Upper lobe of right lung (tissue), 1 donor: ENCODE measurements at regions of chr1 and their contacts with region 1.

Region 1: GRCh38 chr1:165490175-165490574 is 45.2 kb upstream of the RXRG start:
- DNase-seq: no peak
- ATAC-seq: no peak
- H3K4me3 ChIP-seq: no peak overlapping the region
- H3K27ac ChIP-seq: no peak overlapping the region
- H3K4me1 ChIP-seq: no peaks in the 10 kb centered on the region
- H3K27me3 ChIP-seq: no peaks in the 10 kb centered on the region
- CTCF ChIP-seq: no peak

Region 2: GRCh38 chr1:165527251-165528007 is 37.3 kb after region 1 on chr1:
- intact Hi-C with region 1: loop called (anchors 2 kb)
- DNase-seq: no peak
- ATAC-seq: no peak
- H3K4me3 ChIP-seq: no peak overlapping the region
- H3K27ac ChIP-seq: no peak overlapping the region
- H3K4me1 ChIP-seq: no peaks in the 10 kb centered on the region
- H3K27me3 ChIP-seq: no peaks in the 10 kb centered on the region
- CTCF ChIP-seq: no peak